Prostate gland (tissue), 2 donors: ENCODE measurements at regions of chr12 and their contacts with region 1.

Region 1: GRCh38 chr12:48157018-48157888 is at the start of gene ASB8:
- DNase-seq: peak; percentile 96
- H3K4me3 ChIP-seq: peak within 1 kb of the TSS; percentile 72 to 75
- H3K27ac ChIP-seq: peak within 1 kb of the TSS; percentile 68 to 82
- H3K4me1 ChIP-seq: no peaks in the 10 kb centered on the region
- H3K27me3 ChIP-seq: no peaks in the 10 kb centered on the region
- CTCF ChIP-seq: peak in 3 of 4 experiments; percentile 37 to 73 (median 67)
- POLR2A ChIP-seq: peak; percentile 31
- total RNA-seq, gene ASB8: 38.8 to 43.2 TPM

Region 2: DNA sequence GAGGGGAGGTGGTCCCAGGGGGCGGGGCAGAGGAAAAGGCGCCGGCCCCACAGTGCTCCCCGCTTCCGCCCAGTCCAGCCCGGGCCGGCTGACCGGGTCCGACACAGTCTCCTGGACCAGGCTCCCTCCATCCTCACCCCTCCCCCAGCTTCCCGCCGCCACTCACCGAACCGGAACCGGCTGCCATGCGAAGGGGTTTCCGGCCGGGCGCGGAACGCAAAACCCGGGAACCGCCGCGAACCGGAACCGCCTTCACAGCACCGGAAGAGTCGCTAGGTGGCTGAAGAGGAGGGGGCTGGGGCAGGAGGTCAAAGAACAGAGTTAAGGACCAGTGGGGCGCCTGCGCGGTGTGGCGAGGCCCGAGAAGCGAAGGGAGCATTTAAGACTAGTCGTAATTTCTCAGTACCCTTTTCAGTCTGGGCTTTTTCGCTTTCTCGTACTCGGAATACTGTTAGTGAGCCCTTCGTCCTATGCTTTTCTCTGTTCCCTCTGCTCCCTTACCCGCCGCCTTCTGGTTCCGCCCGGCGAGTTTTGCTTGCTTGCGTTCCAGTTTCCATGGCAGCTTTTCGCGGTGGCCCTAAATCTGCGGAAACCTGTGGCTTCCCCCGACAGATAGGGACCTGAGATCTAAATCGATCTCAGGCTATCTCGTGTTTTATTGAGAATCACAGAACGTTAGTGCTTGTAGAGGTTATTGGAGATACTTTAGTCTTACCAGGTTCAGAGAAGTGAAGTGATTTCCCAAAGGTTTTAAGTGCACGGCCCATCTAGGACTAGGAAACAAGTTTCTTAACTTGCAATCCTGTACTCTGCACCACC is 51.2 kb before region 1 on chr12 and contains the start of gene SENP1:
- intact Hi-C with region 1: loop called (anchors 5 kb)
- DNase-seq: peak; percentile 78
- H3K4me3 ChIP-seq: peak within 1 kb of the TSS; percentile 81 to 89
- H3K27ac ChIP-seq: peak within 1 kb of the TSS; percentile 89
- H3K4me1 ChIP-seq: no peaks in the 10 kb centered on the region
- H3K27me3 ChIP-seq: no peaks in the 10 kb centered on the region
- CTCF ChIP-seq: peak in 2 of 4 experiments; percentile 52 to 54
- POLR2A ChIP-seq: no peak
- total RNA-seq, gene SENP1: 11.5 to 49.6 TPM

Region 3: DNA sequence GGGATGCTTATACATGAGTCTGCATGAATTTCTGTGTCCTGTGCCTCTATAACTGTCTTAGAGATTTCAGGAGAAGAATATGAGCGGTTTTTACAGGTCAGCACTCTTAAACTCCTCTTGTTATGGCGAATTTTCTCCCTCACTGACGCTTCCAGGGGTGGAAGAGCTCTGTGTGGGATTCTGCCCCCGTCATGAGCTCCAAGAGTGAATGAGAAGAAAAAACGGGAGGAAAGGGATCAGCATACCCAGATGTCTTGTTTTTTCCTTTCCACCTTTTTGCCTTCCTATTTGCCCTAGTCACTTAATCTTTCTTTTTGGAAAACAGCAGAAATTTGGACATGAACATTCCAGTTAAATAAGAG is 37.4 kb before region 1 on chr12:
- intact Hi-C with region 1: loop called (anchors 5 kb)
- DNase-seq: no peak
- H3K4me3 ChIP-seq: peak overlapping the region; percentile 40 to 48
- H3K27ac ChIP-seq: peak overlapping the region; percentile 5 to 53
- H3K4me1 ChIP-seq: no peaks in the 10 kb centered on the region
- H3K27me3 ChIP-seq: no peaks in the 10 kb centered on the region
- CTCF ChIP-seq: no peak
- POLR2A ChIP-seq: no peak

Region 4: GRCh38 chr12:48580831-48581230 is 423.6 kb after region 1 on chr12:
- intact Hi-C with region 1: no loop called
- DNase-seq: no peak
- H3K4me3 ChIP-seq: no peak overlapping the region
- H3K27ac ChIP-seq: no peak overlapping the region
- H3K4me1 ChIP-seq: no peaks in the 10 kb centered on the region
- H3K27me3 ChIP-seq: no peaks in the 10 kb centered on the region
- CTCF ChIP-seq: no peak
- POLR2A ChIP-seq: no peak